Activated T-helper 1 cell treated with anti-CD3 and anti-CD28 coated beads, Interleukin-12 subunit alpha, Interleukin-12 subunit beta, Interleukin-2, Interleukin-4 antibody, amounts not matched to agents 30 ng/mL and 10 ng/mL and 1 ng/mL, durations not matched to agents 14 hours and 24 hours and 36 hours (primary cell): ENCODE measurements at regions of chr7 and their contacts with region 1.

Region 1: GRCh38 chr7:30800785-30801252 is 29.6 kb downstream of the MINDY4 start:
- DNase-seq: peak; percentile 14
- H3K4me3 Mint-ChIP-seq: no peak overlapping the region
- H3K27ac Mint-ChIP-seq: no peak overlapping the region
- H3K4me1 Mint-ChIP-seq: peaks cover 20% of the 10 kb centered on the region
- H3K27me3 Mint-ChIP-seq: peaks cover 1% of the 10 kb centered on the region

Region 2: DNA sequence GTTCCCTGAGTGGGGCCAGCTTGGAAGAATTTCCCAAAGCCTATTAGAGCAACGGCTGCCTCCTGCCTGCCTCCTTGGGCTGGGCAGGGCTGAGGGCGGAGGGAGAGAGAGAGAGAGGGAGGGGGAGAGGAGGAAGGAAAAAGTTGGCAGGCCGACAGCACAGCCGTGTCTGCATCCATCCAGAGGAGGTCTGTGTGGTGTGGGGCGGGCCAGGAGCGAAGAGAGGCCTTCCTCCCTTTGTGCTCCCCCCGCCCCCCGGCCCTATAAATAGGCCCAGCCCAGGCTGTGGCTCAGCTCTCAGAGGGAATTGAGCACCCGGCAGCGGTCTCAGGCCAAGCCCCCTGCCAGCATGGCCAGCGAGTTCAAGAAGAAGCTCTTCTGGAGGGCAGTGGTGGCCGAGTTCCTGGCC is 110.7 kb after region 1 on chr7 and contains the start of gene AQP1:
- intact Hi-C with region 1: loop called (anchors 10 kb)
- DNase-seq: no peak
- H3K4me3 Mint-ChIP-seq: no peak within 1 kb of the TSS
- H3K27ac Mint-ChIP-seq: no peak within 1 kb of the TSS
- H3K4me1 Mint-ChIP-seq: no peaks in the 10 kb centered on the region
- H3K27me3 Mint-ChIP-seq: no peaks in the 10 kb centered on the region
- total RNA-seq, gene AQP1: 0.12 and 0.13 TPM in 2 replicates

Region 3: GRCh38 chr7:30938435-30939316 is 137.9 kb after region 1 on chr7:
- intact Hi-C with region 1: loop called (anchors 2 kb)
- DNase-seq: peak; percentile 55
- H3K4me3 Mint-ChIP-seq: no peak overlapping the region
- H3K27ac Mint-ChIP-seq: no peak overlapping the region
- H3K4me1 Mint-ChIP-seq: no peaks in the 10 kb centered on the region
- H3K27me3 Mint-ChIP-seq: peaks cover 37% of the 10 kb centered on the region

Region 4: GRCh38 chr7:30974605-30975255 is 173.9 kb after region 1 on chr7:
- intact Hi-C with region 1: loop called (anchors 1 kb)
- DNase-seq: peak; percentile 67
- H3K4me3 Mint-ChIP-seq: no peak overlapping the region
- H3K27ac Mint-ChIP-seq: peak overlapping the region; percentile 79
- H3K4me1 Mint-ChIP-seq: peaks cover 16% of the 10 kb centered on the region
- H3K27me3 Mint-ChIP-seq: peaks cover 14% of the 10 kb centered on the region

Region 5: DNA sequence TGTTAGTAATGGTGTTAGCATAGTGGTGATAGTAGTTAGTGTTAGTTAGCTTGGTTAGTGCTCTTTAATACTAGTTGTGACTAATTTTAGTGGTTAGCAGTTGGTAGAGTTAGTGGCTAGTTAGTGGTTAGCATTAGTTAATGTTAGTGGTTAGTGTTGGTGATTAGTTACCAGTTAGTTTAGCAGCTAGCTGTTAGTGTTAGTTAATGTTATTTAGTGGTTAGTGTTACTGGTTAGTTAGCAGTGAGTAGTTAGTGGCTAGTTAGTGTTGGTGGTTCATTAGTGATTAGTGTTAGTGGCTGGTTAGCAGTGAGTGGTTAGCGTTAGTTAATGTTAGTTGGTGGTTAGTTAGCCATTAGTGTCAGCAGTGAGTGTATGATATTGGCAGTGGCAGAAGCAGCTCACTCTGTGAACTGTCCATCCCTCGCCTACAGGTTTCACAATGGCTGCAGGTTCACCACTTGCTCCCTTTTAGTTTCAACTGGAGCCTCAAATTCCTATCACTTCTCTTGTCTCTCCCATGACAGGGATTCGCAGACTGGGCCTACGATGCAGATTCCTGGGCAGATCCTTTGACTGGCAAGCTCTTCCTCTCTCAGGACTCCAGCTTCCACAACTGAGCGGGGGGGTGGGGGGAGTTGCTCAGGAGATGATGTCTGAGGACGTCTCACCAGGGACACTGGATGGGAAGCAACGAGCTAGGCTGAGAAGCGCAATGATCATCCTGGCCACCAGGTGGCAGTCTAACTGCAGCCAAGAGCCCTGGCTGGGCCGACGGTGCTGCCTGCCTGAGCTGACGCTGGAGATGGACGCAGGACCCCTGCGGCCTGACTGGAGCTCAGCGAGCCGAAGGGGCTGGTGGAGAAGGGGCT is 182.5 kb after region 1 on chr7:
- intact Hi-C with region 1: loop called (anchors 2 kb)
- DNase-seq: peak; percentile 63
- H3K4me3 Mint-ChIP-seq: no peak overlapping the region
- H3K27ac Mint-ChIP-seq: no peak overlapping the region
- H3K4me1 Mint-ChIP-seq: peaks cover 18% of the 10 kb centered on the region
- H3K27me3 Mint-ChIP-seq: peaks cover 28% of the 10 kb centered on the region

Region 6: GRCh38 chr7:31122649-31123058 is 321.8 kb after region 1 on chr7:
- intact Hi-C with region 1: loop called (anchors 1 kb)
- DNase-seq: peak; percentile 13
- H3K4me3 Mint-ChIP-seq: no peak overlapping the region
- H3K27ac Mint-ChIP-seq: no peak overlapping the region
- H3K4me1 Mint-ChIP-seq: no peaks in the 10 kb centered on the region
- H3K27me3 Mint-ChIP-seq: peaks cover 5% of the 10 kb centered on the region

Region 7: GRCh38 chr7:31311552-31311951 is 510.7 kb after region 1 on chr7:
- intact Hi-C with region 1: no loop called
- DNase-seq: no peak
- H3K4me3 Mint-ChIP-seq: no peak overlapping the region
- H3K27ac Mint-ChIP-seq: no peak overlapping the region
- H3K4me1 Mint-ChIP-seq: no peaks in the 10 kb centered on the region
- H3K27me3 Mint-ChIP-seq: no peaks in the 10 kb centered on the region